ENCODE measurements at regions of chr12 and their contacts with region 1.

Region 1: GRCh38 chr12:106302401-106303201 is at the start of gene TCP11L2:
- DNase-seq: peak; percentile 90
- ATAC-seq: peak; percentile 92
- total RNA-seq, gene TCP11L2: 41.5 to 52.5 TPM

Region 2: DNA sequence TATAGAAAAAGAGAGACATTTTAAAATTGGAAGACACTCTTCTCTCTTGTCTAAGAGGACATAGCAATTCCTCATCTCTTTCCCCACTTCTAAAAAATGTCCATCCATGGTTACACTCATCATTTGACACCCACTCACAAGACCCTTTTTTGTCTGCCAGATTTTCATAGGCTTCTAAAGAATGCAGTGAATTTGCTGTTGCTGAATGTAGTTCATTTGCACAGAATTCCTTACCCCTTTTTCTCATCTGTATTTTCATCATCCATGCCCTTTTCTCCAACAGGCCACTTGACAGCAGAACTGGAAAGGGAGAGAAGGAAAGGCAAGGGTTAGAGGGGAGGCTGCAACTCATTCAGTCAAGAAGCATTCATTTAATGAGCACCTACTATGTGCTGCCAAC is 291.9 kb before region 1 on chr12:
- intact Hi-C with region 1: no loop called
- DNase-seq: no peak
- ATAC-seq: no peak

Region 3: DNA sequence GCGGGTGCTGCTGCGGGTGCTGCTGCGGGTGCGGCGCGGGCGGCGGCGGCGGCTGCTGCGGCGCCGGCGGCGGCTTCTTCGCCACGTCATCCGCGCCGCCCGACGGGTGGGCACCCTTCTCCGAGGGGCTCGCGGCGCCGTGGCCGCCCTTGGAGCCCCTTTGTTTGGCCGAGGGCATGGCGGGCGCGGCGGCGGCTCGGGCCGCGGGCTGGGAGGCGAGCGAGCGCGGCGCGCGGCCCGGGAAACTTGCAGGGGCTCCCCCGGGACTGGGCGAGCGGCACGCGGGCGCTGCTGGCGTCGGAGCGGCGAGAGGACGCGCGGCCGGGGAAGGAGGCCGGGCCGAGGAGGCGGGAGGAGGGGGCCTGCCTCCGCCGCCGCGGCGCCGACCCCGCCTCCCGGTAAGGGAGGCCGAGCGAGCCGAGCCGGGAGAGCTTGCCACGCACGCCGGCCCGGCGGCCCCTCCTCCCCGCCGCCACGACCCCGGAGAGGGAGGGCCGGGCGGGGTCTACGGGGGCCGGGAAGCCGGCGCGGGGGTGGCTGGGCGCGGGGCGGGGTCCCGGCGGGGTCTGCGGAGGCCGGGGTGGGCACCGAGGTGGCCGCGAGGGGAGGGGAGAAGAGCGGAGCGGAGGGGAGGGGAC is 54.8 kb before region 1 on chr12 and contains the start of gene CKAP4:
- intact Hi-C with region 1: loop called in 1 of 2 experiments (anchors 5 kb)
- DNase-seq: peak; percentile 85
- ATAC-seq: peak; percentile 81 to 87
- total RNA-seq, gene CKAP4: 36.2 to 56.4 TPM

Region 4: DNA sequence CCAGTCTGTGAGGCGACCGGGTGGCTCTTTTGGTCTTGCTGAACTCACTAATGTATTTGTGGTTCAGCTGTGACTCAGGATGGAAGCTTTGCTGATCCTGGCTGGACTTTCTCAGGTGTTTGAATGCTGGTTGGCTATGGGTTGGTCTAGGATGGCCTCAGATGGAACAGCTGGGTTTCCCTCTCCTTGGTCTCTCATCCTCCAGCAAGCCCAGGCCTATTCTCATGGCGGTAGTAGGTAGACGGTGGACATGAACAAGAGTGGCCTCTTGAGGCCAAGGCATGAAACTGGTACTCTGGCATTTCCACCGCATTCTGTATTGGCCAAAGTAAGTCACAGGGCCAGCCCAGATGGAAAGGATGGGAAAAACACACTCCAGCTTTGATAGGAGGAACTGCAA is 43.1 kb after region 1 on chr12:
- intact Hi-C with region 1: loop called in 1 of 2 experiments (anchors 2 kb)
- DNase-seq: no peak
- ATAC-seq: peak; percentile 52 to 56